T-cell (primary cell): ENCODE measurements at regions of chr20 and their contacts with region 1.

Region 1: GRCh38 chr20:43803276-43803675 is 76.5 kb upstream of the GTSF1L start:
- DNase-seq: no peak
- ATAC-seq: no peak
- H3K4me3 ChIP-seq: no peak overlapping the region
- H3K4me3 Mint-ChIP-seq: no peak overlapping the region
- H3K27ac ChIP-seq: no peak overlapping the region
- H3K27ac Mint-ChIP-seq: no peak overlapping the region
- H3K4me1 ChIP-seq: peaks cover 3 to 14% of the 10 kb centered on the region in 2 experiments
- H3K4me1 Mint-ChIP-seq: peaks cover 9 to 19% (median 10%) of the 10 kb centered on the region in 3 donors
- H3K27me3 ChIP-seq: no peaks in the 10 kb centered on the region
- H3K27me3 Mint-ChIP-seq: peaks cover 0 to 5% of the 10 kb centered on the region in 2 donors

Region 2: GRCh38 chr20:43666376-43667328 is 136.6 kb before region 1 on chr20 and contains the start of gene MYBL2:
- CTCF ChIA-PET with region 1: interaction called in 1 of 2 experiments, 10 read pairs
- POLR2A ChIA-PET with region 1: no interaction called
- DNase-seq: peak; percentile 35 to 83 (median 61)
- ATAC-seq: peak; percentile 92 to 97 (median 94)
- H3K4me3 ChIP-seq: peak within 1 kb of the TSS; percentile 55 to 56
- H3K4me3 Mint-ChIP-seq: peak within 1 kb of the TSS; percentile 56 to 70 (median 65)
- H3K27ac ChIP-seq: no peak within 1 kb of the TSS
- H3K27ac Mint-ChIP-seq: no peak within 1 kb of the TSS
- H3K4me1 ChIP-seq: peaks cover 4 to 15% of the 10 kb centered on the region in 2 experiments
- H3K4me1 Mint-ChIP-seq: peaks cover 0 to 11% (median 4%) of the 10 kb centered on the region in 3 donors
- H3K27me3 ChIP-seq: peaks cover 0 to 45% of the 10 kb centered on the region in 2 experiments
- H3K27me3 Mint-ChIP-seq: peaks cover 18 to 30% of the 10 kb centered on the region in 2 donors
- total RNA-seq, gene MYBL2: 1.2 to 3.0 (median 1.4) TPM